ENCODE measurements at regions of chr9 and their contacts with region 1.

Region 1: DNA sequence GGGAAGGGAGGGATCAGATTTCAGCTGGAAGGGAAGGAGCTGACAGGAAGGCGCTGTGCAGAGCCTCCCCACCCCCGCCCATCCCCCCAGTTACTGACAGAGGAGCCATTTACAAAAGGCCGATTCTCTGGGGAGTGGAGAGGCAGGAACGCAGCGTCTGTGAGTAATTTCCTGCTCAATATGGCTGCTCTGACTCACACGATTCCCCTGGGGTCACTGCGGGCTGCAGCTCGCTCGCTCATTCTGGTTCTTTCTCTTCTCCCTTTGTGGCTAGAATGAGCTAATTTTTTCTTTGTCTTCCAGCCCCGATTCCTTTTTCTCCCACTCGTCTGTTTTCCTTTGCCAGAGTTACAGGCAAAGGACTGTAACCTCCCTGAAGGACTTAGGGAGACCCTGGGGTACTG is 28.8 kb downstream of the PTPA start:
- DNase-seq: peak; percentile 92
- H3K4me3 Mint-ChIP-seq: peak overlapping the region; percentile 72
- H3K27ac Mint-ChIP-seq: peak overlapping the region; percentile 97
- H3K4me1 Mint-ChIP-seq: peaks cover 34% of the 10 kb centered on the region
- H3K27me3 Mint-ChIP-seq: no peaks in the 10 kb centered on the region

Region 2: DNA sequence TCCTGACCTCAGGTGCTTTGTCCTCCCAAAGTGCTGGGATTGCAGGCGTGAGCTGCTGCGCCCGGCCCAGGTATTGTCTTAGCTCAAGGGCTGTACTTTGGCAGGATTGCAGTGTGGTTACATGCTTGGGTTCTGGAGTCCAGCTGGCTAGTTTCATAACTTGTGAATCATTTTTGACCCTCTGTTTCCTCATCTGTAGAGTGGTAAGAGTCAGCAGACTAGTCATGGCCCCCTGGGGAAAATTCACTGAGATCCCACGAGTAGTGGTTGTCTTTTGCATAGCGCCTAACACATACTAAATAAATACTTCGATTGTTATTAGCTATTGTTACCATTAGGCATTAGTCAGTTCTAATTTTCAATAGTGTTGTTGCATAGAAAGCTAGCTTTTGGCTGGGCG is 14.5 kb before region 1 on chr9:
- CTCF ChIA-PET with region 1: interaction called, 50 read pairs
- intact Hi-C with region 1: no loop called
- DNase-seq: no peak
- H3K4me3 Mint-ChIP-seq: no peak overlapping the region
- H3K27ac Mint-ChIP-seq: no peak overlapping the region
- H3K4me1 Mint-ChIP-seq: no peaks in the 10 kb centered on the region
- H3K27me3 Mint-ChIP-seq: no peaks in the 10 kb centered on the region

Region 3: GRCh38 chr9:129166623-129167557 is 26.9 kb after region 1 on chr9:
- CTCF ChIA-PET with region 1: interaction called, 31 read pairs
- intact Hi-C with region 1: no loop called
- DNase-seq: peak; percentile 58
- H3K4me3 Mint-ChIP-seq: peak overlapping the region; percentile 67
- H3K27ac Mint-ChIP-seq: peak overlapping the region; percentile 18
- H3K4me1 Mint-ChIP-seq: peaks cover 22% of the 10 kb centered on the region
- H3K27me3 Mint-ChIP-seq: no peaks in the 10 kb centered on the region

Region 4: GRCh38 chr9:129202613-129203555 is 62.9 kb after region 1 on chr9:
- CTCF ChIA-PET with region 1: no interaction called
- intact Hi-C with region 1: no loop called
- DNase-seq: peak; percentile 89
- H3K4me3 Mint-ChIP-seq: peak overlapping the region; percentile 65
- H3K27ac Mint-ChIP-seq: no peak overlapping the region
- H3K4me1 Mint-ChIP-seq: peaks cover 18% of the 10 kb centered on the region
- H3K27me3 Mint-ChIP-seq: no peaks in the 10 kb centered on the region

Region 5: GRCh38 chr9:129320575-129321263 is 180.7 kb after region 1 on chr9:
- CTCF ChIA-PET with region 1: interaction called, 12 read pairs
- intact Hi-C with region 1: loop called (anchors 10 kb)
- DNase-seq: peak; percentile 77
- H3K4me3 Mint-ChIP-seq: peak overlapping the region; percentile 68
- H3K27ac Mint-ChIP-seq: peak overlapping the region; percentile 67
- H3K4me1 Mint-ChIP-seq: peaks cover 18% of the 10 kb centered on the region
- H3K27me3 Mint-ChIP-seq: no peaks in the 10 kb centered on the region

Region 6: DNA sequence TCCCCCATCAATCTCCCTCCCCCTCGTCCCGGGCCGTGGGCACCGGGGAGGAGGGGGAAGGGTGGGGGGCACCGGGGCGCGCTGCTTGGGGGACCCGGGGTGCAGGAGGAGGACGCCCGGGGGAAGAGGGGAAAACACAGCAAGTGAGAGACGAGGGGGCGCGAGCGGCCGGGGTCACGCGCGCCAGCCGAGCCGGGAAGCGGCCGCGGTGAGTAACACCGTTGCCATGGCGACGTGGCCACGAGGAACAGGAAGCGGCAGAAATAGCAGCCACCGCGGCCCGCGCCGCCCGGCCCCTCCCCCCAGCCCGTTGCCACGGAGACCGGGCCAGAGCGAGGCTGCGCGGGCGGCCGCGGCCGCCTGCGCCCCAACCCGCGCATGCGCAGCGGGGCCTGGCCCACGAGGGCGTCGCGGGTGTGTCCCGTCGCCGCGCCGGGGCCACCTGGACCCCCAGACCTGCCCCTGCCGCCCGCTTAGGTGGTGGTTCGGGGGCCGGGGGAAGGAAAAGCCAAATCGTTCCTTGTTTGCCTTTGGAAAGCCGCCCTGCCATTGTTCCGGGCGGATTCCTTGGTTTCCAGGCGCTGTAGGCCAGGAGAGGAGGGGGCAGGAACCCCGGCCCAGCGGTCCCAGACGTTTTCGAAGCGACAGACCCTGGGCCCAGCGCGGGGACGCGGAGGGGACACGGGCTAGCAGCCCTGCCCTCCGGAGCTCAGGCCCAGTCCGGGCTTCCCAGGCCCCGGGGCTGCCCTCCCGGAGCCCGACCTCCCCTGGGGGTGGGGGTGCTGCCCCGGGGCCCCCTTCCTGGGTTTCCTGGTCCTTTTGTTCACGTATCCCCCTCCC is 273.8 kb after region 1 on chr9:
- CTCF ChIA-PET with region 1: interaction called, 3 read pairs
- intact Hi-C with region 1: loop called (anchors 1 kb)
- DNase-seq: peak; percentile 99
- H3K4me3 Mint-ChIP-seq: peak overlapping the region; percentile 82
- H3K27ac Mint-ChIP-seq: peak overlapping the region; percentile 93
- H3K4me1 Mint-ChIP-seq: peaks cover 14% of the 10 kb centered on the region
- H3K27me3 Mint-ChIP-seq: no peaks in the 10 kb centered on the region

Region 7: GRCh38 chr9:129584136-129584535 is 444.1 kb after region 1 on chr9:
- CTCF ChIA-PET with region 1: interaction called, 10 read pairs
- intact Hi-C with region 1: no loop called
- DNase-seq: peak; percentile 75
- H3K4me3 Mint-ChIP-seq: no peak overlapping the region
- H3K27ac Mint-ChIP-seq: no peak overlapping the region
- H3K4me1 Mint-ChIP-seq: peaks cover 44% of the 10 kb centered on the region
- H3K27me3 Mint-ChIP-seq: no peaks in the 10 kb centered on the region

Region 8: GRCh38 chr9:129626079-129626624 is 486.2 kb after region 1 on chr9 and contains the start of gene NTMT1:
- CTCF ChIA-PET with region 1: interaction called, 19 read pairs
- intact Hi-C with region 1: no loop called
- DNase-seq: peak; percentile 92
- H3K4me3 Mint-ChIP-seq: peak within 1 kb of the TSS; percentile 77
- H3K27ac Mint-ChIP-seq: peak within 1 kb of the TSS; percentile 93
- H3K4me1 Mint-ChIP-seq: peaks cover 59% of the 10 kb centered on the region
- H3K27me3 Mint-ChIP-seq: peaks cover 14% of the 10 kb centered on the region
- total RNA-seq, gene NTMT1: 58.6 to 59.3 TPM

Measured in activated naive CD4-positive, alpha-beta T cell treated with anti-CD3 and anti-CD28 coated beads for 36 hours (primary cell).